ENCODE measurements at regions of chr3 and their contacts with region 1.

Region 1: DNA sequence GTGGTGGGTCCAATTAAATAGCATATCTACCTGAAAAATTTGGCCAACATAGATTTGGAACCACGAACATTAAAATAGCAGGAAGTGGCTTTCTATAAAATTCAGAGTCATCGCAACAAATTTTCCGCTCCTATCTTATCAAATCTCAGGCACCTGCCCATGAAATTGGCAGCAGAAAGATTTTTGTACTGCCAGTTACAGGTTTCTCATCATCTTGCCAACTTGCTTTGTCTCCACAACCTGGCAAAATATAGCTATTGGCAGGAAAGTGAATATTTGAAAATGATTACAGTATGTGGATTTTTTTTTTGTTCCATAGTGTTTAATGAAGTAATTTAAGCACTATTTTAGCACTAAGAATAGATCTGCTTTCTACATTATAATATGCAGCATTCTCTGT is 161.6 kb upstream of the LRRC3B start:
- H3K4me3 Mint-ChIP-seq: no peak overlapping the region
- H3K27ac Mint-ChIP-seq: no peak overlapping the region
- H3K4me1 Mint-ChIP-seq: no peaks in the 10 kb centered on the region
- H3K27me3 Mint-ChIP-seq: no peaks in the 10 kb centered on the region

Region 2: DNA sequence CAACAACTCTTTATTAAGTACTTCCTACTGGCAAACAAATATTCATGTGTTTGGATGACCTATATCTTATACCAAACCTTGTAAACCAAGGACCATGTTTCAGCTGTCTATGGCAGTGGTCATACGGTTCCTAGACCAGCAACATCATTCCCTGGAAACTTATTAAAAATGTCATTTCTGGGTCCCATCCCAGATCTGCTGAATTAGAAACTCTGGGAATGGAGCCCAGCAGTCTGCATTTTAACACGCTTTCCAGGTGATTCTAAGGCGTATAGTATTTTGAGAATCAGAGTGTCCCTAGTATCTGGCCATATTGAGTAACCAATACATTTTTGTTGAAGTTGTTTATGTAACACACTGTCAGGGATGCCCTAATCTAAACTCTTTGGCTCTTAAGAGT is 201.8 kb before region 1 on chr3:
- intact Hi-C with region 1: loop called (anchors 10 kb)
- H3K4me3 Mint-ChIP-seq: no peak overlapping the region
- H3K27ac Mint-ChIP-seq: no peak overlapping the region
- H3K4me1 Mint-ChIP-seq: no peaks in the 10 kb centered on the region
- H3K27me3 Mint-ChIP-seq: no peaks in the 10 kb centered on the region

Region 3: DNA sequence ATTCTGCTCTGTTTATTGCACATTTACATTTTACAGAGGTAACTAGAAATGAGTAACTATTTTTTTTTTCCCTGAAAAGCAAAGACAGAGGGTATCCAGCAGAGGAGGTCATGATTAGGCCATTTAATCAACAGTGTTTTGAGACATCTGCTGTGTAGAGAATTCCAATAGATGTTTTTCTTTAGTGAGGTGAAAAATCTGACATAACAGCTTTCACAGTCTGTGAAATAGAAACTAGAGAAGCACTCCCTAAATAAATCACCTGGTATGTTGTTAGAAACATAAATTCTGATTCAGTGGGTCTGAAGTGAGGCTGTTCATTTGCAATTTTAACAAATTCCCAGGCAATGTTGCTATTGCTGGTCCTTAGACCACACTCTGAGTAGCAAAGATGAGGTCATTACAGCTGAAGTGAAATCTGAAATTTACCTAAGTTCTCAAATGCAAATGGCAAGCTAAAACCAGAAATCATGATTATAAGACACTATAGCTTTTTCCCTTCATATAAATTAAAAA is 167.6 kb before region 1 on chr3:
- intact Hi-C with region 1: no loop called
- H3K4me3 Mint-ChIP-seq: no peak overlapping the region
- H3K27ac Mint-ChIP-seq: no peak overlapping the region
- H3K4me1 Mint-ChIP-seq: no peaks in the 10 kb centered on the region
- H3K27me3 Mint-ChIP-seq: no peaks in the 10 kb centered on the region

Measured in dendritic cell treated with granulocyte-macrophage colony-stimulating factor and Interleukin-4, amounts not matched to agents 40 ng/mL and 50 ng/mL, for 4 days (primary cell).